Activated CD4-positive, alpha-beta T cell treated with anti-CD3 and anti-CD28 coated beads, Interleukin-2, amount 10 ng/mL, durations not matched to agents 7 days and 5 days (primary cell): ENCODE measurements at regions of chr11 and their contacts with region 1.

Region 1: GRCh38 chr11:134050541-134051383 is 18.1 kb upstream of the JAM3 start:
- DNase-seq: peak; percentile 77
- H3K4me3 Mint-ChIP-seq: no peak overlapping the region
- H3K27ac Mint-ChIP-seq: no peak overlapping the region
- H3K4me1 Mint-ChIP-seq: peaks cover 14% of the 10 kb centered on the region
- H3K27me3 Mint-ChIP-seq: peaks cover 22% of the 10 kb centered on the region

Region 2: GRCh38 chr11:134008634-134009071 is 42.1 kb before region 1 on chr11:
- CTCF ChIA-PET with region 1: no interaction called
- POLR2A ChIA-PET with region 1: no interaction called
- DNase-seq: no peak
- H3K4me3 Mint-ChIP-seq: no peak overlapping the region
- H3K27ac Mint-ChIP-seq: no peak overlapping the region
- H3K4me1 Mint-ChIP-seq: no peaks in the 10 kb centered on the region
- H3K27me3 Mint-ChIP-seq: peaks cover 28% of the 10 kb centered on the region

Region 3: DNA sequence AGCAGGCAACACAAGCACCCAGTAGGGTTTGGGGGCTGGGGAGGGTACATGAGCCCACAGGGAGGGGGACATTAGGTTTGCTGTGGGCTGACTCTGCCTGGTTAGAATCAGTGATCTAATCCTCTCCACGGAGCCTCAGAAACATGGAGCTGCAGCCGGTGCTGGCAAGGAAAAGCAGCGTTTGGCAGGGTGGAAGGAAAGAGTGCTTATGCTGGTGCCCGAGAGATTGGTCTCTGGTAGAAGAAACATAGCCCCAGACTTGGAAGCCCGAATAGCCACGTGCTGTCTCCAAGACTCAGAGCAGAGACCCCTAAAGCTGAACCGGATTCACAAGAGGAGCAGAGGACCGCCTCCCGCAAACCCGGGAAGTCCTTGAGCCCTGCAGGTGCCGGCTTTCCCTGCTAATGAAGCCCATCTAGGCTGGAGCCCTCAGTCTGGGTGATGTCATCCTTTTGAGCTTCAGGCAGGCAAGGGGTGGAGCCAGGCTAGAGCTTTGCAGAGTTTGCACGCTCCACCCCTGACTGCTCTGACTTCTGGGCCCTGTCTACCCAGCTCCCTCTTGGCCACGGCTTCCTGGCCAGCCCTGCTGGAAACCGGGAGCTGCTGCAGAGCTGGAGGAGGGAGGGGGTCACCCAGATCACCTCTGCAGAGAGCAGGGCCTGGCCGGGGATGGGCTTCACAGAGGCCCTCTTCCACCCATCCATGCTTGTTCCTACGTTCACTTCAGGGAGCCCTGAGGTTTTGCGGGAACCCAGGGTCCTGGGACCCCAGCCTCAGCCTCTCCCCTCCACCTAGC is 16.9 kb before region 1 on chr11:
- CTCF ChIA-PET with region 1: interaction called, 27 read pairs
- POLR2A ChIA-PET with region 1: no interaction called
- DNase-seq: peak; percentile 81
- H3K4me3 Mint-ChIP-seq: peak overlapping the region; percentile 42
- H3K27ac Mint-ChIP-seq: peak overlapping the region; percentile 84
- H3K4me1 Mint-ChIP-seq: peaks cover 68% of the 10 kb centered on the region
- H3K27me3 Mint-ChIP-seq: peaks cover 14% of the 10 kb centered on the region

Region 4: GRCh38 chr11:134040386-134041302 is 10.1 kb before region 1 on chr11:
- CTCF ChIA-PET with region 1: interaction called, 27 read pairs
- POLR2A ChIA-PET with region 1: interaction called, 4 read pairs
- DNase-seq: no peak
- H3K4me3 Mint-ChIP-seq: no peak overlapping the region
- H3K27ac Mint-ChIP-seq: no peak overlapping the region
- H3K4me1 Mint-ChIP-seq: peaks cover 21% of the 10 kb centered on the region
- H3K27me3 Mint-ChIP-seq: no peaks in the 10 kb centered on the region

Region 5: GRCh38 chr11:134062265-134063123 is 11.7 kb after region 1 on chr11:
- CTCF ChIA-PET with region 1: interaction called, 15 read pairs
- POLR2A ChIA-PET with region 1: no interaction called
- DNase-seq: no peak
- H3K4me3 Mint-ChIP-seq: no peak overlapping the region
- H3K27ac Mint-ChIP-seq: no peak overlapping the region
- H3K4me1 Mint-ChIP-seq: peaks cover 34% of the 10 kb centered on the region
- H3K27me3 Mint-ChIP-seq: peaks cover 41% of the 10 kb centered on the region

Region 6: DNA sequence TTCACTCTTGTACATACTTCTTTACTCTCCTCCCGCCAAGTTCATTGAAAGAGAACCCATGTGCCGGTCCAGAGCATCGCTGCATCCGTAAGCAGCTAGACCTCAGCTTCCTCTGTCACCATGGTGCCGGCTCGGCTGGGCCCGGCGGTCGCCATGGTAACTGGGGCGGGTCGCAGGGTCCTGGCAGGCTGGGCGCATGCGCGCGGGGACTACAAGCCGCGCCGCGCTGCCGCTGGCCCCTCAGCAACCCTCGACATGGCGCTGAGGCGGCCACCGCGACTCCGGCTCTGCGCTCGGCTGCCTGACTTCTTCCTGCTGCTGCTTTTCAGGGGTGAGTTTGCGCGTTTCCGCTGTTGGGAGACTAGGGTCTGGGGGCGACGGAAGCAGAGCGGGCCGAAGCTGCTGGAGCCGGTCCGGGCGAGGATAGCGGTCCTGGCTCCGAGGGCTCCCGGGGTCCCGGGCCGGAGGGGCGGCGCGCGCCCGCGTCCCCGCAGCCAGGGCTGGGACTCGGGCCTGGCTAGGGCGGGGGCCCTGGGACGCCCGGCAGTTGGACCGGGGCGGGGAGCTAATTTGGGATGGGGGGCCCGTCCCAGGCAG is 18.2 kb after region 1 on chr11 and contains the start of gene JAM3:
- CTCF ChIA-PET with region 1: interaction called, 10 read pairs
- POLR2A ChIA-PET with region 1: no interaction called
- DNase-seq: peak; percentile 97
- H3K4me3 Mint-ChIP-seq: peak within 1 kb of the TSS; percentile 81
- H3K27ac Mint-ChIP-seq: peak within 1 kb of the TSS; percentile 48
- H3K4me1 Mint-ChIP-seq: peaks cover 13% of the 10 kb centered on the region
- H3K27me3 Mint-ChIP-seq: peaks cover 55% of the 10 kb centered on the region
- total RNA-seq, gene JAM3: 4.8 to 5.0 TPM

Region 7: DNA sequence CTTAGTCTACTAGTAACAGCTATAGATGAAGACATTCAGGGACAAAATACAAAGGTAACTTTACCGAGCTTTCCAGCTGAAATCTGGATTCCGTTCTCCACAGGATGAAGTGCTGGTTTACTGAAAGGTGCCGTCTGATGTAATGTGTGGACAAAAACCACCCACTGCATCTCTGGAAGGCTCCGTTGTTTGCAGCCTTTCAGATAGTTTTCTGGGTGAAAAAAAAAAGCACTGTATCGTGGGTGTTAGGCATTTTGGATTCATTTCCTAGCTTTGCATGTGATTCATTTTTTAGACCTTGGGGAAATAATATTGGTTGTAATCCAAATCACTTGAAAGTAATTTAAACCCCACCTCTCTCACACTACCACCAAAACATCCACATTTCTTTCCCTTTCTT is 28.6 kb after region 1 on chr11:
- CTCF ChIA-PET with region 1: no interaction called
- POLR2A ChIA-PET with region 1: no interaction called
- DNase-seq: no peak
- H3K4me3 Mint-ChIP-seq: no peak overlapping the region
- H3K27ac Mint-ChIP-seq: no peak overlapping the region
- H3K4me1 Mint-ChIP-seq: no peaks in the 10 kb centered on the region
- H3K27me3 Mint-ChIP-seq: peaks cover 2% of the 10 kb centered on the region